AG04449 (cell line): ENCODE measurements at regions of chr1 and their contacts with region 1.

Region 1: GRCh38 chr1:215992620-215993019 is 425.5 kb downstream of the KCTD3 start:
- DNase-seq: no peak
- H3K4me3 ChIP-seq: no peak overlapping the region
- CTCF ChIP-seq: peak; percentile 42

Region 2: GRCh38 chr1:215957663-215958062 is 35.0 kb before region 1 on chr1:
- CTCF ChIA-PET with region 1: no interaction called
- POLR2A ChIA-PET with region 1: no interaction called
- DNase-seq: no peak
- H3K4me3 ChIP-seq: no peak overlapping the region
- CTCF ChIP-seq: no peak

Region 3: DNA sequence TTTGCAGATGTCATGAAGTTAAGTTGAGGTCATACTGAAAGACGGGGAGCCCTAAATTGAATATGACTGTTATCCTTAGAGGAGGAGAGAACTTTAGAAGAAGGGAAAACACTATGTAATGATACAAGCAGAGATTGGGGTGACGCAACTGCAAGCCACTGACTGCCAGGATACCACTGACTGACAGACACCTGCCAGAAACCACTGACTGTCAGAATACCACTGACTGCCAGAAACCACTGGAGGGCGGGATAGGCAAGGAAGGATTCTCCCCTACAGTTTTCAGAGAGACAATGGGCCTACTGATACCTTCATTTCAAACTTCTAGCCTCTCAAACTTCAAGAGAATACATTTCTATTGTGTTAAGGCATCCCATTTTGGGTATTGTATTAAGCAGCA is 41.9 kb after region 1 on chr1:
- CTCF ChIA-PET with region 1: no interaction called
- POLR2A ChIA-PET with region 1: no interaction called
- DNase-seq: no peak
- H3K4me3 ChIP-seq: no peak overlapping the region
- CTCF ChIP-seq: peak; percentile 44

Region 4: GRCh38 chr1:216119602-216120001 is 127.0 kb after region 1 on chr1:
- CTCF ChIA-PET with region 1: interaction called, 16 read pairs
- POLR2A ChIA-PET with region 1: no interaction called
- DNase-seq: no peak
- H3K4me3 ChIP-seq: no peak overlapping the region
- CTCF ChIP-seq: peak; percentile 63